WTC11 (cell line): ENCODE measurements at regions of chr17 and their contacts with region 1.

Region 1: GRCh38 chr17:45148183-45149036 is at the start of gene HEXIM1:
- DNase-seq: peak; percentile 99
- ATAC-seq: peak; percentile 75
- H3K4me3 Mint-ChIP-seq: peak within 1 kb of the TSS; percentile 98
- H3K27ac Mint-ChIP-seq: peak within 1 kb of the TSS; percentile 100
- H3K4me1 Mint-ChIP-seq: peaks cover 34% of the 10 kb centered on the region
- H3K27me3 Mint-ChIP-seq: peaks cover 5% of the 10 kb centered on the region; the same call in 1 of the 2 replicates
- CTCF ChIP-seq: no peak
- total RNA-seq, gene HEXIM1: 29.6 to 36.9 TPM (median 35.2 TPM) in 3 replicates

Region 2: GRCh38 chr17:45161019-45161825 is 12.8 kb after region 1 on chr17:
- CTCF ChIA-PET with region 1: interaction called, 171 read pairs
- POLR2A ChIA-PET with region 1: interaction called, 242 read pairs
- DNase-seq: peak; percentile 98
- ATAC-seq: peak; percentile 93
- H3K4me3 Mint-ChIP-seq: peak overlapping the region; percentile 99
- H3K27ac Mint-ChIP-seq: peak overlapping the region; percentile 95
- H3K4me1 Mint-ChIP-seq: peaks cover 32% of the 10 kb centered on the region
- H3K27me3 Mint-ChIP-seq: no peaks in the 10 kb centered on the region
- CTCF ChIP-seq: no peak

Region 3: DNA sequence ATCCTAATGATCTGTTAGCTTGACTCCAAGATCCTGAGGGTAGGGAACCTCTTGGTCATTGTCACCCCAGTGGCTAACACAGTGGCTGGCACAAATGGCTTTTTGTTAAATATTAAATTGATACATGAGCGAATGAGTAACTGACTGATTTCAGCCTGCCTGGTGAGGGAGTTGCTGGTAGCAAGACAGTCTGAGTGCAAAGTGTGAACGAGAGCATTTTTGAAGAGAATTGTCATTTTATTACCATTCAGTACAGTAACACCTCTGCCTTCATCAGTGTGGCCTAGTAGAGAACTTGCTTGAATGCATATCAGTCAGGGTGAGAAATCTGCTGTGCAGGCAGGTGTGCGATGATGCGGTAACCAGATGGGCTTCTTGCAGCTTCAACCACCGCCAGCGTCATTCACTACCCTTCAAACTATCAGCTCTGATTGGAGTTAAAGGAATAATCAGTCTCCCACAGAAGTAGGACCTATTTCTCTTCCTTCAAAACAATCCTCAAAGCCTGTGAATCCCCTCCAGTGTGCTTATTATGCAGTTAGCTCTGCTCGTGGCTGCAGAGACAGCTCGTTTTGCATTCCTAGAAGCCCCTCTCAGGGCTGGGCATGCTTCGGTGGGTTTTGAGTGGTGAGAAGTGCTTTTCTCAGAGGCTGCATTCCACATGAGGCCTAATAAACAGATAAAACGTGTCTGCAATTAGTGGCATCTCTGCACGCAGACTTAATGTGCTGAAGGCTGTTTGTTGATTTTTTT is 42.3 kb after region 1 on chr17:
- CTCF ChIA-PET with region 1: interaction called, 14 read pairs
- POLR2A ChIA-PET with region 1: interaction called, 4 read pairs
- DNase-seq: no peak
- ATAC-seq: no peak
- H3K4me3 Mint-ChIP-seq: no peak overlapping the region
- H3K27ac Mint-ChIP-seq: no peak overlapping the region
- H3K4me1 Mint-ChIP-seq: no peaks in the 10 kb centered on the region
- H3K27me3 Mint-ChIP-seq: no peaks in the 10 kb centered on the region
- CTCF ChIP-seq: no peak

Region 4: GRCh38 chr17:45235416-45236281 is 87.2 kb after region 1 on chr17:
- CTCF ChIA-PET with region 1: interaction called, 19 read pairs
- POLR2A ChIA-PET with region 1: interaction called, 13 read pairs
- DNase-seq: peak; percentile 94
- ATAC-seq: peak; percentile 69
- H3K4me3 Mint-ChIP-seq: no peak overlapping the region
- H3K27ac Mint-ChIP-seq: no peak overlapping the region
- H3K4me1 Mint-ChIP-seq: peaks cover 9% of the 10 kb centered on the region
- H3K27me3 Mint-ChIP-seq: peaks cover 63% of the 10 kb centered on the region
- CTCF ChIP-seq: peak; percentile 81

Region 5: GRCh38 chr17:45247429-45248131 is 99.2 kb after region 1 on chr17:
- CTCF ChIA-PET with region 1: interaction called, 25 read pairs
- POLR2A ChIA-PET with region 1: interaction called, 18 read pairs
- DNase-seq: peak; percentile 99
- ATAC-seq: peak; percentile 87
- H3K4me3 Mint-ChIP-seq: peak overlapping the region; percentile 83
- H3K27ac Mint-ChIP-seq: peak overlapping the region; percentile 80
- H3K4me1 Mint-ChIP-seq: peaks cover 21% of the 10 kb centered on the region
- H3K27me3 Mint-ChIP-seq: peaks cover 2% of the 10 kb centered on the region
- CTCF ChIP-seq: no peak